ENCODE measurements at regions of chr17 and their contacts with region 1.

Region 1: DNA sequence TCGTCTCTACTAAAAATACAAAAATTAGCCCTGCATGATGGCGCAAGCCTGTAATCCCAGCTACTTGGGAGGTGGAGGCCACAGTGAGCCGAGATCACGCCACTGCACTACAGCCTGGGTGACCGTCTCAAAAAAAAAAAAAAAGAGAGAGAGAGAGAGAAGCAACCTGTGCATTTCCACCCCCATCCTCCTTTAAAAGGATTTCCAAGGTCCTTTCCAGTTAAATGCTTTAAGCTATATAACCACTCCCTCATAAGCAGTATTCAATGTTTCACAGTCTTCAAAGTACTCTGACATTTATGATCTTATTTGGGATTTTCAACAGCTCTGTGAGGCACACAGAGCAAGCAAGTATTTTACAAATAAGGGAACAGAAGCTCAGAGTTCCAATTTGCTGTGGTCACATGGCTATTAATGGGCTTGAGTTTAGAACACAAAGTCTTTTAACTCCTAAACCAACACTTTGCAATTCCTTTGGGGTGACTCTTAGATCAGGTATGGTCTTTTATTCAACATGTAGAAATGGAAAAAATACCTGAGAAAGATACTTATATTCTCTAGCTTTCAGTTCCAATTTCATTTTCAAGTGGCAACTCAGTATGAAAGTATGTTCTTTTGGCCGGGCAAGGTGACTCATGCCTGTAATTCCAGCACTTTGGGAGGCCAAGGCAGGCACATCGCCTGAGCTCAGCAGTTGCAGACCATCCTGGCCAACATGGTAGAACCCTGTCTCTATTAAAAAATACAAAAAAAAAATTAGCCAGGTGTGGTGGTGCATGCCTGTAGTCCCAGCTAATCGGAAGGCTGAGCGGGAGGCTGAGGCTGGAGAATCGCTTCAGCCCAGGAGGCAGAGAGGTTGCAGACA is 31.3 kb downstream of the SPOP start:
- DNase-seq: peak; percentile 42
- ATAC-seq: peak; percentile 76
- H3K4me3 Mint-ChIP-seq: peak overlapping the region; percentile 22
- H3K27ac Mint-ChIP-seq: peak overlapping the region; percentile 60
- H3K4me1 Mint-ChIP-seq: peaks cover 28% of the 10 kb centered on the region
- H3K27me3 Mint-ChIP-seq: no peaks in the 10 kb centered on the region

Region 2: GRCh38 chr17:49459401-49459984 is 187.1 kb before region 1 on chr17:
- CTCF ChIA-PET with region 1: no interaction called
- POLR2A ChIA-PET with region 1: no interaction called
- DNase-seq: no peak
- ATAC-seq: no peak
- H3K4me3 Mint-ChIP-seq: no peak overlapping the region
- H3K27ac Mint-ChIP-seq: no peak overlapping the region
- H3K4me1 Mint-ChIP-seq: peaks cover 2% of the 10 kb centered on the region
- H3K27me3 Mint-ChIP-seq: peaks cover 46% of the 10 kb centered on the region

Region 3: DNA sequence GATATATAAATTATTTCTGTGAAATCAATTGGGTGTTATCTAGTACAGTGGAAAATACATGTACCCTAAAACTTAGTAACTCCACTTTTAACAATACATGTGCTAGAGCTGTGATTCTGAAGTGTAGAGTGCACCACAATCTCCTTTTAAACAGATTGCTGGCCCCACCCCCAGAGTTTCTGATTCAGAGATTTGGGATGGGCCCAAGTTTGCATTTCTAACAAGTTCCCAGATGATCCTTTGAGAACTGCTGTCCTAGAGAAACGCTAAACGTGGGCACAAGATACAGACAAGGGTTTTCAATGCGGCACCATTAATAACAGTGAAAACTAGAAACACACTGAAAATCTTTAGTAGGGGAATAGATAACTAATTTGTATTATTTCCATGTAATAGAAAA is 21.7 kb before region 1 on chr17:
- CTCF ChIA-PET with region 1: no interaction called
- POLR2A ChIA-PET with region 1: no interaction called
- DNase-seq: no peak
- ATAC-seq: no peak
- H3K4me3 Mint-ChIP-seq: no peak overlapping the region
- H3K27ac Mint-ChIP-seq: no peak overlapping the region
- H3K4me1 Mint-ChIP-seq: peaks cover 13% of the 10 kb centered on the region
- H3K27me3 Mint-ChIP-seq: no peaks in the 10 kb centered on the region

Region 4: GRCh38 chr17:49670641-49671040 is 24.0 kb after region 1 on chr17:
- CTCF ChIA-PET with region 1: interaction called, 11 read pairs
- POLR2A ChIA-PET with region 1: no interaction called
- DNase-seq: no peak
- ATAC-seq: no peak
- H3K4me3 Mint-ChIP-seq: no peak overlapping the region
- H3K27ac Mint-ChIP-seq: no peak overlapping the region
- H3K4me1 Mint-ChIP-seq: peaks cover 33% of the 10 kb centered on the region
- H3K27me3 Mint-ChIP-seq: no peaks in the 10 kb centered on the region

Region 5: GRCh38 chr17:49723423-49723822 is 76.8 kb after region 1 on chr17:
- CTCF ChIA-PET with region 1: no interaction called
- POLR2A ChIA-PET with region 1: no interaction called
- DNase-seq: no peak
- ATAC-seq: no peak
- H3K4me3 Mint-ChIP-seq: no peak overlapping the region
- H3K27ac Mint-ChIP-seq: peak overlapping the region; percentile 29
- H3K4me1 Mint-ChIP-seq: peaks cover 10% of the 10 kb centered on the region
- H3K27me3 Mint-ChIP-seq: no peaks in the 10 kb centered on the region

Measured in activated CD8-positive, alpha-beta T cell treated with anti-CD3 and anti-CD28 coated beads, Interleukin-2, amount 10 ng/mL, durations not matched to agents 7 days and 5 days (primary cell).